Right cardiac atrium (tissue), 5 donors: ENCODE measurements at regions of chr9 and their contacts with region 1.

Region 1: DNA sequence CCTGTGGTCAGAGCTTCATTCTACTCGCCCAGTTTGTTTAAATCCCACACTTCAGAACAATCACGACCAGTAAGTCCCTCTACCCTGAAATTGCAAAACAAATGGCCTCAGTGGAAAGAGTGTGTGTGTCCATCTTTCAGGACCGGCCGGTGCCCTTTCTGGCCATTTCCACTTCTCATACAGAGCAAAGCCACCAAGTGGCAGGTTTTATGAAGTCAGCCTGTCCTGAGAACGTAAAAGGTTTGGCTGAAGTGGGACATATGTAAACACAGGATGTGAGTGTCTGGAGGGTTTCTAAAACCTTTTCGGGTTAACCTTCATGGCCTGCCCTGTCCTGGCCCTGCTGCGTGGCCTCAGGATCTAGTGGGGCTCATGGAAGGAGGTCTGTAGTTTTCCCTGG is 24.7 kb downstream of the NXNL2 start:
- DNase-seq: no peak
- ATAC-seq: no peak
- H3K4me3 ChIP-seq: no peak overlapping the region
- H3K27ac ChIP-seq: no peak overlapping the region
- H3K4me1 ChIP-seq: no peaks in the 10 kb centered on the region
- H3K27me3 ChIP-seq: no peaks in the 10 kb centered on the region

Region 2: DNA sequence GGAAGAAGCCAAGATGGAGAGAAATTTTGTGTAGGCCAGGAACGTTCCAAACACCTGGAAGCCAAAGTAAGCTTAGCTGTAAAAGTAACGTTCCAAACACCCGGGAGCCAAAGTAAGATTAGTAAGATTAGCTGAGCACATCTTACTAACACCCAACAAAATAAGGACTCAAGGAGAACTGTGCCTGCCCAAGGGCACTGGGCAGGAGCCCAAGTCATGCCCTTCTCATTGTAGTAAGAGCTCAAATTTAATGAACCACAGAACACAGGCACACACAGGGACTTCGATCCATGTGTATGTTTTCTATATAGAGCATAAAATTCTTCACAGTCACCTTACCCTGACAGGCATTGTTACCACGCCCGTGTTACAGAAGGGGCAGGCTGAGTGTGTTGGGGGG is 60.8 kb before region 1 on chr9:
- intact Hi-C with region 1: loop called in 1 of 4 experiments (anchors 10 kb)
- DNase-seq: peak in 1 of 3 donors; percentile 62
- ATAC-seq: peak; percentile 40 to 57
- H3K4me3 ChIP-seq: no peak overlapping the region
- H3K27ac ChIP-seq: no peak overlapping the region
- H3K4me1 ChIP-seq: no peaks in the 10 kb centered on the region
- H3K27me3 ChIP-seq: no peaks in the 10 kb centered on the region

Region 3: DNA sequence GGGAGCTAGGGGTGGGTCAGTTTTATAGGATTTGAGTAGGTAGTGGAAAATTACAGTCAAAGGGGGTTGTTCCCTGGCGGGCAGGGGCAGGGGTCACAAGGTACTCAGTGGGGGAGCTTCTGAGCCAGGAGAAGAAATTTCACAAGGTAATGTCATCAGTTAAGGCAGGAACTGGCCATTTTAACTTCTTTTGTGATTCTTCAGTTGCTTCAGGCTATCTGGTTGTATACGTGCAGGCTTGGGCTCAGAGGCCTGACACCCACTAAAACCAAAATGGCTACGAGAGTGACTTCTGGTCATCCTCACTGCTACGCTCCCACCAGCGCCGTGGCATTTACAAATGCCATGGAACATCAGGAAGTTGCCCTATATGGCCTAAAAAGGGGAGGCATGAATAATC is 45.4 kb before region 1 on chr9:
- intact Hi-C with region 1: no loop called
- DNase-seq: no peak
- ATAC-seq: no peak
- H3K4me3 ChIP-seq: no peak overlapping the region
- H3K27ac ChIP-seq: no peak overlapping the region
- H3K4me1 ChIP-seq: no peaks in the 10 kb centered on the region
- H3K27me3 ChIP-seq: no peaks in the 10 kb centered on the region

Region 4: DNA sequence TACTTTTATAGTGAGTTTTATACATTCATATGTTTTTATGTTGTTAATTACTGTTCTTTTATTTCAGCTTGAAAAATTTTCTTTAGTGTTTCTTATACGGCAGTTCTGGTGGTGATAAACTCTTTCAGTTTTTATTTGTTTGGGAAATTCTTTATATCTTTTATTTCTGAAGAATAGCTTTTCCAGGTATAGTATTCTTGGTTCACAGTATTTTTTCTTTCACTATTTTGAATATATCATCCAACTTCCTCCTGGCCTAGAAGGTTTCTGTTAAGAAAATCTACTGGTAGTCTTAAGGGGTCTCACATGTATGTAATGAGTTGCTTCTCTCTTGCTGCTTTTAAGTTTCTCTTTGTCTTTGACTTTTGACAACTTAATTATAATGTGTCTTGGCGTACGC is 54.7 kb after region 1 on chr9:
- intact Hi-C with region 1: no loop called
- DNase-seq: no peak
- ATAC-seq: no peak
- H3K4me3 ChIP-seq: no peak overlapping the region
- H3K27ac ChIP-seq: no peak overlapping the region
- H3K4me1 ChIP-seq: no peaks in the 10 kb centered on the region
- H3K27me3 ChIP-seq: no peaks in the 10 kb centered on the region

Region 5: GRCh38 chr9:88680505-88681160 is 121.0 kb after region 1 on chr9:
- intact Hi-C with region 1: no loop called
- DNase-seq: no peak
- ATAC-seq: peak; percentile 11 to 32
- H3K4me3 ChIP-seq: no peak overlapping the region
- H3K27ac ChIP-seq: no peak overlapping the region
- H3K4me1 ChIP-seq: no peaks in the 10 kb centered on the region
- H3K27me3 ChIP-seq: no peaks in the 10 kb centered on the region